T-cell (primary cell): ENCODE measurements at regions of chrX and their contacts with region 1.

Region 1: GRCh38 chrX:44244008-44244407 is 99.5 kb downstream of the EFHC2 start:
- DNase-seq: peak in 6 of 35 experiments; percentile 3 to 53 (median 12)
- ATAC-seq: peak in 3 of 4 experiments; percentile 27 to 47 (median 42)
- H3K4me3 ChIP-seq: no peak overlapping the region
- H3K4me3 Mint-ChIP-seq: no peak overlapping the region
- H3K27ac ChIP-seq: no peak overlapping the region
- H3K27ac Mint-ChIP-seq: peak overlapping the region in 1 of 2 donors; percentile 53
- H3K4me1 ChIP-seq: peaks cover 3 to 4% of the 10 kb centered on the region in 2 experiments
- H3K4me1 Mint-ChIP-seq: peaks cover 30 to 45% (median 39%) of the 10 kb centered on the region in 3 donors
- H3K27me3 ChIP-seq: no peaks in the 10 kb centered on the region
- H3K27me3 Mint-ChIP-seq: peaks cover 0 to 8% of the 10 kb centered on the region in 2 donors

Region 2: DNA sequence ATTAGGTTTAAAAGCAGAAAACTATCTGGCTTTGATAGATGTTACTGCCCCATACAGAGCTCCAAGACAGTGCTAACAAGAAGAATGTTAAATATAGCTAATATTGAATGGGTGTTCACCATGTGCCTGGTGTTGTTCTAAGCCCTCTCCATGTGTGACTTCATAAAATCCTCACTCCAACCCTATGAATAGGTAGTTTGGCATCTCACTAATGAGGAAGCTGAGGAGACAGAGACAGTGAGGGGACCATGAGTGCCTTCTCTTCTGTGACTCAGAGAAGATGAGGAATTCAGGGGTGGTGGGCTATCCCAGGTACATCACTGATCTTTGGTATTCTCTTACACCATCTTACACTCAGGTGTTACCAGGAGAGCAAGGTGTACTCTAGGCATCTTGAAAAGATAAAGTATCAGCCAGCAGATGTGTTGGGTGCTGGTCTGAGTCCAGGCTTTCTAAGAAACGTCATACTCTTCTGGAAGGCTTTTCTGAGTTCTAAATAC is 1472.1 kb before region 1 on chrX:
- CTCF ChIA-PET with region 1: no interaction called
- POLR2A ChIA-PET with region 1: no interaction called
- DNase-seq: no peak
- ATAC-seq: no peak
- H3K4me3 ChIP-seq: no peak overlapping the region
- H3K4me3 Mint-ChIP-seq: no peak overlapping the region
- H3K27ac ChIP-seq: no peak overlapping the region
- H3K27ac Mint-ChIP-seq: no peak overlapping the region
- H3K4me1 ChIP-seq: no peaks in the 10 kb centered on the region
- H3K4me1 Mint-ChIP-seq: peaks cover 8 to 12% (median 10%) of the 10 kb centered on the region in 3 donors
- H3K27me3 ChIP-seq: no peaks in the 10 kb centered on the region
- H3K27me3 Mint-ChIP-seq: peaks cover 0 to 5% of the 10 kb centered on the region in 2 donors

Region 3: DNA sequence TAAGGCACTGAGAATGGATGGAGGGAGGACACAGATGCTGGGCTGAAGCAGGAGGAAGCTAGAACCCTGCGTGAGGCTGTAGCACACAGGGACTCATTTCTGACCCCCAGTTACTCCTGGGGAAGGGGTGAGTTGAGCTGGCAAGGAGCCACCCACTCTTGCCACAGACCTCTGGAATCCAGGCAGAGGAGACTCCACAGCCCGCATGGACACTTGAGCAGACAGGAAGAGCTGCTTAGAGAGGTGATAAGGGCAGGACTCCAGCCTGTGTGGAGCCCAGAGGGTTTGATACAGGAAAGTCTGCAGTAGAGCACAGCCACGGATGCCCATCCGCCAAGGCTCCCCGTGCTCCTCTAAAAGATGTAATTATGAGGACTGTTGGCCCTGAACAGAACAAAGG is 757.7 kb before region 1 on chrX:
- CTCF ChIA-PET with region 1: no interaction called
- POLR2A ChIA-PET with region 1: no interaction called
- DNase-seq: no peak
- ATAC-seq: no peak
- H3K4me3 ChIP-seq: no peak overlapping the region
- H3K4me3 Mint-ChIP-seq: no peak overlapping the region
- H3K27ac ChIP-seq: no peak overlapping the region
- H3K27ac Mint-ChIP-seq: no peak overlapping the region
- H3K4me1 ChIP-seq: no peaks in the 10 kb centered on the region
- H3K4me1 Mint-ChIP-seq: no peaks in the 10 kb centered on the region
- H3K27me3 ChIP-seq: peaks cover 0 to 3% of the 10 kb centered on the region in 2 experiments
- H3K27me3 Mint-ChIP-seq: peaks cover 2 to 27% of the 10 kb centered on the region in 2 donors

Region 4: DNA sequence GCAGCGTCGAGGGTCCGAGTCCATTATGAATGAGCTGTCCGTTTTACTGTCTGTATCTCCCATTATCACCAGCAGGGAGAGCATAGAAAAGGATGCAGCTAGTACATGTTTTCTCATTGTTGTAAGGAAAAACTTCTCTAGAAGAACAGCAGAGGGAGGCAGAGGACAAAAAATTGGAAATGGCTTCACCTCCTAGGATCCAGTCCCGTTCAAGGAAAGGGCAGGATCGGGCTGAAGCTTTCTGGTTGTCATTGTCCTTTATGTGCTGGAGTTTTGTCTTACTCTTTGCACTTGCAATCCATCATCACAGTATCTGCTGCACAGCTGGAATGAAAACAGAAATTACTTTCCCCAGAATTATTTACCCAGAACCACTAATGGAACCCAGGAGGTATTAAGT is 285.5 kb before region 1 on chrX:
- CTCF ChIA-PET with region 1: interaction called, 5 to 35 read pairs
- POLR2A ChIA-PET with region 1: no interaction called
- DNase-seq: peak in 11 of 35 experiments; percentile 0 to 72 (median 8)
- ATAC-seq: peak; percentile 47 to 73 (median 64)
- H3K4me3 ChIP-seq: no peak overlapping the region
- H3K4me3 Mint-ChIP-seq: no peak overlapping the region
- H3K27ac ChIP-seq: no peak overlapping the region
- H3K27ac Mint-ChIP-seq: no peak overlapping the region
- H3K4me1 ChIP-seq: no peaks in the 10 kb centered on the region
- H3K4me1 Mint-ChIP-seq: peaks cover 4 to 7% (median 5%) of the 10 kb centered on the region in 3 donors
- H3K27me3 ChIP-seq: no peaks in the 10 kb centered on the region
- H3K27me3 Mint-ChIP-seq: peaks cover 4 to 43% of the 10 kb centered on the region in 2 donors

Region 5: DNA sequence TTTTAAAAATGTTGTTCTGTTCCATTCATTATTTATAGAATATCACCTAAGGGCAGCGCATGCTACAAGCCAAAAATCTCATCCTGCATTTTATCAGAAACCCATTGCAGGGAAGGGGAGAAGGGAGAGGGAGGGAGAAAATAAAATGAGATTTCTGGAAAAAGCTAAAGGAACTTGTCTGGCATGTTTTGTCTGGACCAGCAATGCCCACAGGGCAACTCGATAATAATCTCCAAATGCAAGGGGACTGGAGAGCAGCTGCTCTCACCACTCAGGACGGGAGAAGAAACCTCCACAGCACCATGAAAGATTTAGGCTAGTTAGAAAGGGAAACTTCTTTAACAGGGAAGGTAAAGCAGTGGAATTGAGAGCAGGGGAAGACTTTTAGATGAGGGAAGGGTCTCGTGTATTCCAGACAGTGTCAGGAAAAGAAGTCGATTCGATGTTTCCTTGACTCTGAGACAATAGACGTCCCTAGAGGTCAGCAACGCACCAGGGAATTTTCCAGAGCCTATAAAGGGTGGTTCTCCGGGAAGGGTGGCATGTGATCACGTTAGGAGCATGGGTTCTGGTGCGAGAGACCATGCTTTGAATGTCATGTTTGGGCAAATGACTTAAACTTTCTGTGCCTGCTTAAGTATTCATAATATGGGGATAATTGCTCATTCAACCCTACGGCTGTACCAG is 138.6 kb before region 1 on chrX:
- CTCF ChIA-PET with region 1: no interaction called
- POLR2A ChIA-PET with region 1: no interaction called
- DNase-seq: no peak
- ATAC-seq: no peak
- H3K4me3 ChIP-seq: no peak overlapping the region
- H3K4me3 Mint-ChIP-seq: no peak overlapping the region
- H3K27ac ChIP-seq: no peak overlapping the region
- H3K27ac Mint-ChIP-seq: no peak overlapping the region
- H3K4me1 ChIP-seq: no peaks in the 10 kb centered on the region
- H3K4me1 Mint-ChIP-seq: no peaks in the 10 kb centered on the region
- H3K27me3 ChIP-seq: no peaks in the 10 kb centered on the region
- H3K27me3 Mint-ChIP-seq: peaks cover 0 to 11% of the 10 kb centered on the region in 2 donors